Endothelial cell of umbilical vein (primary cell): ENCODE measurements at regions of chr5 and their contacts with region 1.

Region 1: GRCh38 chr5:124599028-124599973 is 147.1 kb downstream of the ZNF608 start:
- DNase-seq: peak; percentile 98
- H3K4me3 ChIP-seq: peak overlapping the region in 1 of 3 experiments; percentile 41
- H3K27ac ChIP-seq: peak overlapping the region; percentile 99
- H3K4me1 ChIP-seq: peaks cover 63% of the 10 kb centered on the region
- H3K27me3 ChIP-seq: no peaks in the 10 kb centered on the region
- CTCF ChIP-seq: no peak
- POLR2A ChIP-seq: peak; percentile 78

Region 2: GRCh38 chr5:123813937-123814624 is 785.2 kb before region 1 on chr5:
- CTCF ChIA-PET with region 1: no interaction called
- POLR2A ChIA-PET with region 1: no interaction called
- dilution Hi-C with region 1: no loop called
- intact Hi-C with region 1: loop called (anchors 5 kb)
- DNase-seq: peak; percentile 93
- H3K4me3 ChIP-seq: peak overlapping the region in 1 of 3 experiments; percentile 6
- H3K27ac ChIP-seq: peak overlapping the region; percentile 51
- H3K4me1 ChIP-seq: peaks cover 13% of the 10 kb centered on the region
- H3K27me3 ChIP-seq: no peaks in the 10 kb centered on the region
- CTCF ChIP-seq: no peak
- POLR2A ChIP-seq: no peak

Region 3: DNA sequence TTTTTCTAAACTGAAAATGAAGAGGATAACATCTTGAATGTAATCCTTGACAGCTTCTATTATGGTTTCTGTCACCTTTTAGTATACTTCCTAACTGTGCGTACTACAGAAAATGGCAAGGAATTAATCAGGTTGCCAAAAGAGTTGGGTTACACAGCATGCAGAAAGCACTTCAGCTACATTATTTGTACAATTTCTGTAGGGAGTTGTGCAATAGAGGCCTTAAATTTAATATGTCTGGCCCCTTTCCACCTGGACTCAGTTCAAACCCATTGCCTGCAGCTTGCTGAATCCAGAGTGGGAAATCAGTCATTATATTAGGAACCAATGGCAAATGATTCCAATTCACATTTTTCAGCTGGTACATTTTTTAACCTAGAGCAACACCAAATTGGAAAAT is 537.6 kb before region 1 on chr5:
- CTCF ChIA-PET with region 1: no interaction called
- POLR2A ChIA-PET with region 1: no interaction called
- dilution Hi-C with region 1: no loop called
- intact Hi-C with region 1: loop called (anchors 5 kb)
- DNase-seq: no peak
- H3K4me3 ChIP-seq: no peak overlapping the region
- H3K27ac ChIP-seq: no peak overlapping the region
- H3K4me1 ChIP-seq: peaks cover 15% of the 10 kb centered on the region
- H3K27me3 ChIP-seq: no peaks in the 10 kb centered on the region
- CTCF ChIP-seq: no peak
- POLR2A ChIP-seq: no peak

Region 4: GRCh38 chr5:124812754-124813358 is 213.6 kb after region 1 on chr5:
- CTCF ChIA-PET with region 1: no interaction called
- POLR2A ChIA-PET with region 1: no interaction called
- dilution Hi-C with region 1: no loop called
- intact Hi-C with region 1: loop called (anchors 2 kb)
- DNase-seq: peak; percentile 82
- H3K4me3 ChIP-seq: no peak overlapping the region
- H3K27ac ChIP-seq: peak overlapping the region; percentile 81
- H3K4me1 ChIP-seq: peaks cover 10% of the 10 kb centered on the region
- H3K27me3 ChIP-seq: no peaks in the 10 kb centered on the region
- CTCF ChIP-seq: no peak
- POLR2A ChIP-seq: no peak

Region 5: DNA sequence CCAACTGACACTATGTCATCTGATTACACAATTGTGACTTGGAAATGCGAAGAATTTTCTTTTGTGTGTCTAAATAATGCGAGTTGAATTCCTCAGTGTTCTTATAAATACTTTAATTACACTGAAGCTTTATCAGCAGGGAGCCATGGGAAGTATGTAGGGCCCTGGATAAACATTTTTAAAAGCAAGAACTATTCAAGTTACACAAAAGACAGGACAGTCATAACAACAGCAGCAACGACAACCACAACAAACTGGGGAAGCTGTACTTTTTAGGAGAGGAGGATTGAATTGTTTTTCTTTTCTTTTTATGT is 397.4 kb after region 1 on chr5:
- CTCF ChIA-PET with region 1: no interaction called
- POLR2A ChIA-PET with region 1: no interaction called
- dilution Hi-C with region 1: no loop called
- intact Hi-C with region 1: loop called (anchors 1 kb)
- DNase-seq: peak; percentile 68
- H3K4me3 ChIP-seq: no peak overlapping the region
- H3K27ac ChIP-seq: no peak overlapping the region
- H3K4me1 ChIP-seq: peaks cover 8% of the 10 kb centered on the region
- H3K27me3 ChIP-seq: no peaks in the 10 kb centered on the region
- CTCF ChIP-seq: no peak
- POLR2A ChIP-seq: no peak

Region 6: GRCh38 chr5:125484742-125485641 is 885.7 kb after region 1 on chr5:
- CTCF ChIA-PET with region 1: interaction called, 3 read pairs
- POLR2A ChIA-PET with region 1: no interaction called
- dilution Hi-C with region 1: no loop called
- intact Hi-C with region 1: loop called (anchors 1 kb)
- DNase-seq: peak; percentile 96
- H3K4me3 ChIP-seq: peak overlapping the region in 1 of 3 experiments; percentile 28
- H3K27ac ChIP-seq: peak overlapping the region; percentile 99
- H3K4me1 ChIP-seq: peaks cover 36% of the 10 kb centered on the region
- H3K27me3 ChIP-seq: no peaks in the 10 kb centered on the region
- CTCF ChIP-seq: no peak
- POLR2A ChIP-seq: peak; percentile 72